ENCODE measurements at regions of chr18 and their contacts with region 1.

Region 1: GRCh38 chr18:42341423-42341822 is 386.4 kb downstream of the PIK3C3 start:
- DNase-seq: no peak
- H3K4me3 Mint-ChIP-seq: no peak overlapping the region
- H3K27ac Mint-ChIP-seq: no peak overlapping the region
- H3K4me1 Mint-ChIP-seq: no peaks in the 10 kb centered on the region
- H3K27me3 Mint-ChIP-seq: no peaks in the 10 kb centered on the region

Region 2: GRCh38 chr18:42414746-42415454 is 73.5 kb after region 1 on chr18:
- intact Hi-C with region 1: loop called (anchors 10 kb)
- DNase-seq: no peak
- H3K4me3 Mint-ChIP-seq: no peak overlapping the region
- H3K27ac Mint-ChIP-seq: no peak overlapping the region
- H3K4me1 Mint-ChIP-seq: no peaks in the 10 kb centered on the region
- H3K27me3 Mint-ChIP-seq: no peaks in the 10 kb centered on the region